Endothelial cell of umbilical vein (primary cell): ENCODE measurements at regions of chr12 and their contacts with region 1.

Region 1: DNA sequence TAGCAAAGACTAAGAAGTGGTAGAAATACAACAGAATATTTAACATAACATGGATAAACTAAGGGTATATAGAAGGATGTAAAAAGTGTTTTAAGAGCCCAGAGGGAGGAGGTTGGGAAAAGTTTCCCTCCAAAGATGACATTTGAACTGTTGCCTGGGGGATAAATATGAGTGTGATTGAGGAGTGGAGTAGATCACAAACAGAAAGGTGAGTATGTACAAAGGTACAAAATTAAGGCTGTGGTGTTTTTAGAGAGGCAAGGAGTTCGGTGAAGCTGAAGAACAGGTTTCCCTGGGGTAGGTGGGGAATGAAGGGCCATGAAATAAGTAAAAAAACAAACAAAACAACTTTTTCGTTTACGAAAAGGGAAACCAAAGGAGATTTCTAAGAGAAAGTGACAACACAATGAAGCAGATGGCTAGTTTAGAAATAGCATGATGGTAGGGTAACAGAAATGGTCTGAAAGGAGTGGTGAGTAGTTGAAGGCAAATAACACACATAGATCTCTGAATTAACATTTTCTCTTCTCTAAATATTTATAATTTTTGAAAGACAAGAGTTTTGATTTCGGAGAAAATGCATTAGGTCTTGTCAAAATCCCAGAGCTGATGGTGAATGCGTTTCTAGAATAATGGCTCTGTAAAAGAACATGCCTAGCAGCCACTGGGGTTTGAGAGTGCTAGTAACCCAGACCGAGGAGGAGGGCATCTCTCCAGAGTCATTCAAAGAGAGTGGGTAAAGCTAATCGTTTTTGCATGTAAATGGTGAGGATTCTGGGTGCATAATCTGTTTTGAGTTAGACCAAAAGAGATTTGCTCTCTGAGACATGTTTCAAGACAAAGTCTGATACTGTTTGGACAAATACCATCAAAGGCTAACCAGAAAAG is 240.4 kb upstream of the DCN start:
- DNase-seq: no peak
- H3K4me3 ChIP-seq: no peak overlapping the region
- H3K27ac ChIP-seq: no peak overlapping the region
- H3K4me1 ChIP-seq: no peaks in the 10 kb centered on the region
- H3K27me3 ChIP-seq: no peaks in the 10 kb centered on the region
- CTCF ChIP-seq: no peak
- POLR2A ChIP-seq: no peak

Region 2: DNA sequence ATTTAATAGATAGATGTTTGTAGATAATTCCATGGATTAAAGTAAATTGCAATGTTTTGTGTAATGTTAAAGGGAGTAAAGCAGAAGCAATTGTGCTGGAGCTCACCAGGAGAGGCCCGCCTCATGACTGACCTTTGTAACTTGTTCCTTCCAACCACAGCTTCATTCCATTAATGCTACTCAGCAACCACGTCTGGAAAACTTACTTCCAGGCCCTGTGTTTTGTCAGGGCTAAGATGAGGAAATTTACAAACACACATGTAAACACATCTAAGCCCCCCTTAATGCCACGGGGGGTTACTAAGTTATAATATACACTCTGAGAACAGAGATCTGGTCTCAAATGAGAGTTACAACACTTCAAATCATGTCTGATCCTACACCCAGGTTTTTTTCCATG is 324.1 kb before region 1 on chr12:
- CTCF ChIA-PET with region 1: no interaction called
- POLR2A ChIA-PET with region 1: no interaction called
- dilution Hi-C with region 1: no loop called
- intact Hi-C with region 1: no loop called
- DNase-seq: no peak
- H3K4me3 ChIP-seq: no peak overlapping the region
- H3K27ac ChIP-seq: no peak overlapping the region
- H3K4me1 ChIP-seq: no peaks in the 10 kb centered on the region
- H3K27me3 ChIP-seq: no peaks in the 10 kb centered on the region
- CTCF ChIP-seq: no peak
- POLR2A ChIP-seq: no peak

Region 3: GRCh38 chr12:91441993-91442952 is 19.2 kb after region 1 on chr12:
- CTCF ChIA-PET with region 1: no interaction called
- POLR2A ChIA-PET with region 1: no interaction called
- dilution Hi-C with region 1: no loop called
- intact Hi-C with region 1: loop called (anchors 1 kb)
- DNase-seq: no peak
- H3K4me3 ChIP-seq: no peak overlapping the region
- H3K27ac ChIP-seq: no peak overlapping the region
- H3K4me1 ChIP-seq: no peaks in the 10 kb centered on the region
- H3K27me3 ChIP-seq: no peaks in the 10 kb centered on the region
- CTCF ChIP-seq: no peak
- POLR2A ChIP-seq: no peak